Colonic mucosa (tissue), 4 donors: ENCODE measurements at regions of chr17 and their contacts with region 1.

Region 1: GRCh38 chr17:12365805-12366204 is 299.9 kb upstream of the MYOCD start:
- DNase-seq: no peak
- H3K4me3 ChIP-seq: no peak overlapping the region
- H3K27ac ChIP-seq: no peak overlapping the region
- H3K4me1 ChIP-seq: no peaks in the 10 kb centered on the region
- H3K27me3 ChIP-seq: no peaks in the 10 kb centered on the region
- CTCF ChIP-seq: no peak

Region 2: DNA sequence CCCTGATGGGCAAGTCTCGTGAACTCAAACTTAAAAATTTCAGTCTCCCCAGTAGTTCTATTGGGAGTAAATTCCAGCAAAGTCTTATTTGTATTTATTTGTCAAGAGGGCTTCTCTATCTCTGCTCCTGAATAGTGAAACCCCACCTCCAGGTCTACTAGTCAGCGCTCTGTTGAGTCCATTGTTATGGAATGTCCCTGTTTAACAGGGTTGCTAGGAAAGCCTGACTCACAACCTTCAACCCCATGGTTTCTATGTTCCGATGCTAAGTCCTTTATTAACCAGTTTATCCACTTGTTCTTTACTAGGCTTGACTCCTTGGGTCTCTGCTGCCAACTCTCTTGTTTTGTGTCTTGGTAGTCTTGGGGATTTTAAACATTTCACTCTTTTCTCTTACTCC is 49.2 kb after region 1 on chr17:
- intact Hi-C with region 1: loop called (anchors 10 kb)
- DNase-seq: no peak
- H3K4me3 ChIP-seq: no peak overlapping the region
- H3K27ac ChIP-seq: no peak overlapping the region
- H3K4me1 ChIP-seq: no peaks in the 10 kb centered on the region
- H3K27me3 ChIP-seq: no peaks in the 10 kb centered on the region
- CTCF ChIP-seq: no peak

Region 3: DNA sequence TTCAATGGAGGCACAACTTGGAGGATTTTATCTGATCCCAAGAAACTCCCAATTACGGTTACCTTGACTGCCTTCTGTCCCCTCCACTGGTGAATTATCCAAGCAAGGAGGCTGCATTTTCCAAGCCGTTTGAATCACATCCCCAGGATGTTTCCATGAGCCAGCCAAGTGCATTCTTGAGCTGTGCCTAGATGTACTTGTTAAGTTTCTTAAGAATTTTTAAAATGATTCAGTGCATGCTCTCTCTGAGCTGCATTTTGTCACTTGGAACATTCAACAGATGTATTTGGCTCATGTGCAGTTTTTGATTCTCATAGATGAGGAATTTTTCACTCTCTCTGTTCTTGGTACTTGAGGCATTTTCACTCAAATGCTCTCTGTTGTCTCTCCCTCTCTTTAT is 97.3 kb after region 1 on chr17:
- intact Hi-C with region 1: loop called (anchors 10 kb)
- DNase-seq: no peak
- H3K4me3 ChIP-seq: no peak overlapping the region
- H3K27ac ChIP-seq: no peak overlapping the region
- H3K4me1 ChIP-seq: no peaks in the 10 kb centered on the region
- H3K27me3 ChIP-seq: no peaks in the 10 kb centered on the region
- CTCF ChIP-seq: no peak

Region 4: GRCh38 chr17:12507026-12507595 is 141.3 kb after region 1 on chr17:
- intact Hi-C with region 1: no loop called
- DNase-seq: no peak
- H3K4me3 ChIP-seq: no peak overlapping the region
- H3K27ac ChIP-seq: no peak overlapping the region
- H3K4me1 ChIP-seq: no peaks in the 10 kb centered on the region
- H3K27me3 ChIP-seq: no peaks in the 10 kb centered on the region
- CTCF ChIP-seq: no peak